SK-N-SH (cell line): ENCODE measurements at regions of chr2 and their contacts with region 1.

Region 1: GRCh38 chr2:98649135-98649991 is 41.0 kb downstream of the UNC50 start:
- DNase-seq: peak; percentile 70
- H3K4me3 ChIP-seq: no peak overlapping the region; a peak in 1 of 4 replicates
- H3K27ac ChIP-seq: peak overlapping the region in 1 of 2 experiments; percentile 11; a peak in 1 of 4 replicates
- H3K4me1 ChIP-seq: no peaks in the 10 kb centered on the region
- H3K27me3 ChIP-seq: no peaks in the 10 kb centered on the region
- CTCF ChIP-seq: peak; percentile 98
- EP300 ChIP-seq: no peak
- RAD21 ChIP-seq: peak; percentile 99

Region 2: DNA sequence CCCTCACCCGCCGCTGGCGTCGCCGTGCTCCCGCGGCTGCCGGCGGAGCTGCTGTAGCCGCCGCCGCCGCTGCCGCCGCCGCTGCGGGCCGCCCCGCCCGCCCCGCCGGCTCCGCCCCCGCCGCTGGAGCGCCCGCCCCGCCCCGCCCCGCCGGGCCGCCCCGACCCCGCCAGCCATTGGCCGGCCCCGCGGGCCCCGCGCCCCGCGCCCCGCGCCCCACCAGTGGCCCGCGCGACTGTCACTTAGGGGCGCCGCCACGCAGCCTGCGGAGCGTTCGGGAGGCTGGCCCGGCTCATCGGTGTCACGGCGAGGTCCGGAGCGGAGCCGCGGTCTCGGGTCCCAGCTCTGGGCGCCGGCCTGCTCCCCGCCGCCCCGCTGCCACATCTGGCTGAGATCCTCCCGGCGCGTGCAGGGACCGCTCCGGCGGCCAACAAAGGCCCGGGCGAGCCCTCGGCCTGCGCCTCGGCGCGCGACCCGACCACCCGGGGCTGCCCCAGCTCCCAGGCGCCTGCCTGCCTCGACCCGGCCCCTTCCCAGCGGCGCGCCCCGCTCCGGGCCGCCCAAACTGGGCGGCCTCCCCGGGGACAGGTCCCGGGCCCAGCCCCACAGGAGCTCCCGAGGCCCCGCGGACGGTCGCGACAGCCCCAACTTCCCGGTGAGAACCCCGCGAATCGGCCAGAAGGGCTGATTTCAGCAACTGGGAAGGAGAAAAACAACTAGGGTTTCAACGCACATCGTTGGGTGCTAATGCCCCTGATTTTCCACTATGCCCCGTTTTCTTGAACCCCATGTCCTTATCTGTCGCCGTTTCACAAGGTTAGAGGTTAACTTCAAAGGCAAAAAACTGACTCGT is 81.9 kb after region 1 on chr2 and contains the start of gene MGAT4A:
- CTCF ChIA-PET with region 1: interaction called, 12 read pairs
- POLR2A ChIA-PET with region 1: no interaction called
- DNase-seq: peak; percentile 94
- H3K4me3 ChIP-seq: peak within 1 kb of the TSS; percentile 57 to 60
- H3K27ac ChIP-seq: no peak within 1 kb of the TSS; a peak in 1 of 4 replicates
- H3K4me1 ChIP-seq: peaks cover 5% of the 10 kb centered on the region in 2 experiments; a peak in 3 of 4 replicates
- H3K27me3 ChIP-seq: peaks cover 30% of the 10 kb centered on the region
- CTCF ChIP-seq: no peak
- EP300 ChIP-seq: no peak
- RAD21 ChIP-seq: no peak
- polyA plus RNA-seq, gene MGAT4A: 0.05 and 0.07 TPM in 2 replicates

Region 3: GRCh38 chr2:98828793-98829371 is 179.5 kb after region 1 on chr2:
- CTCF ChIA-PET with region 1: interaction called, 64 read pairs
- POLR2A ChIA-PET with region 1: no interaction called
- DNase-seq: no peak
- H3K4me3 ChIP-seq: no peak overlapping the region
- H3K27ac ChIP-seq: no peak overlapping the region
- H3K4me1 ChIP-seq: no peaks in the 10 kb centered on the region
- H3K27me3 ChIP-seq: peaks cover under 1% of the 10 kb centered on the region; the same call in 1 of the 2 replicates
- CTCF ChIP-seq: no peak
- EP300 ChIP-seq: no peak
- RAD21 ChIP-seq: no peak

Region 4: GRCh38 chr2:98846041-98846440 is 196.7 kb after region 1 on chr2:
- CTCF ChIA-PET with region 1: interaction called, 47 read pairs
- POLR2A ChIA-PET with region 1: no interaction called
- DNase-seq: no peak
- H3K4me3 ChIP-seq: no peak overlapping the region
- H3K27ac ChIP-seq: no peak overlapping the region
- H3K4me1 ChIP-seq: peaks cover 0 to 5% of the 10 kb centered on the region in 2 experiments; a peak in 1 of 4 replicates
- H3K27me3 ChIP-seq: no peaks in the 10 kb centered on the region; the same call in 1 of the 2 replicates
- CTCF ChIP-seq: no peak
- EP300 ChIP-seq: no peak
- RAD21 ChIP-seq: no peak